ENCODE measurements at regions of chr5 and their contacts with region 1.

Region 1: DNA sequence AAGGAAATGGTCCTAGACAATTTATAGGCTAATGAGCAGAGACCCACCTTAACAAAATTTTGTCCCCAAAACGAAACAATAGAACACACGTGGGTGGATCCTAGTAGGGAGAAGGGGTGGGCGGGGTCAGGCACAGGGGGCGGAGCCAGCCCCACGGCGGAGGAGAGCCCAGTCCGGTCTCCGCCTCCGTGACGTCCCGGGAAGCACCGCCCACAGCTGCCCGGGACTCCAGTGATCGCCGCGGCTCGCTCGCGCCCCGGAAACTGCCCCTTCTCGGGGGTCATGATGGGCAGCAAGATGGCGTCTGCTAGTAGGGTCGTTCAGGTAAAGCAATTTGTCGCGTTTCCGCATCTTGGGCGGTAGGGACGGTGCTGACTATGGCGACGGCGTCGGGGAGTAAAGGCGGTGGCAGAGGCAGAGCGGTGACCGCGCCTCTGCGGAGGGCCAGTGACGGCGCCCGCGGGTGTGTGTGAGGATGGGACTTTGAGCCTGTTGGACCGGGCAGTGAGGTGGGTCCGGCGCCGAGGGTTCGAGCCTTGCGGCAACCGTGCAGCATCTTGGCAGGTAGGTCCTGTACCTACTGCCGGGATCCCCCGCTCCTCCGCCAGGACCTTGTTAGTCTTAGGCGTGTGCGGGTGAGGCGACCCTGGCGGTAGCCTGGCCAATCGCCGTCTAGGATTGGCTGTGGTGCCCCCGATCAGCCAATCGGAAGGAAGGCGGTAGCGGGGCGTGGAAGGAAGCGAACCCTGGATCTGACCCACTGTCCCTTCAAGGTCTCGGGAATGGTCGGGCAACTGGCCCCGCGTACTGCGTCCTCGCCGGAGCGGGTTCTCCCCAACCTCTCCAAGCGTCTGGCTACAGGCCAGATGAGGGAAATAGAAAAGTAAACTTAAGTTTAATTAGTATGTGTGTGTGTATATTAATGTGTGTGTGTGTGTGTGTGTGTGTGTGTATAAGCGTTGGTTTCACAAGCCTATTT is 16.8 kb upstream of the CDK7 start:
- DNase-seq: peak; percentile 93
- H3K4me3 Mint-ChIP-seq: peak overlapping the region; percentile 99
- H3K27ac Mint-ChIP-seq: peak overlapping the region; percentile 93
- H3K4me1 Mint-ChIP-seq: peaks cover 14% of the 10 kb centered on the region
- H3K27me3 Mint-ChIP-seq: no peaks in the 10 kb centered on the region

Region 2: DNA sequence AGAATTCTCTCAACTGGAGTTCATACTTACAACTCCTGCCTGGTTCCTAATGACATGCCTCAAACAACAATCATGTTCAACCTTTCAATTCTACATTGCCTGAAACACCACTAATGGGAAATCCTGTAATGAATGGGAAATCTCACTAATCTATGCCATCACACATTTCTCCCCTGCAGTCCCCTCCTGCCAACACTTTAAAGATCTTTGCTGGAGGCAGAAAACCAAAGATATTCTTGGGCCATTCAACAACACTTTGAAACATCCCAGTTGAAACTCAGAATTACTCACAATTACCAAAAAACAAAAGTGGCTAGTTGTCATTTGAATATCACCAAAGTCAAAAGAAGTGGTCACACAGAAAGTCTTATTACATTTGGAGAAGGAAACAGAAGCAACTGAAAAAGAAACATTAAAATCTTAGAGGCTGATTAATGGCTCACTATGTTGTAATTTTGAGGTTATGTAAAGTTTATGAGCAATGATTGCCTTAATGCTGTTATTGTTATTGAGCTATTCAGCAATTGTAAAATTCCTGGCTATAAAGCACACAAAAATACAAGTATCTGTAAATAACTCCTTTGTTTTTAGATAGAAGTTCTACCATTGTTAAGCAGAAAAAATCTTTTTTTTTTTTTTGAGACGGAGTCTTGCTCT is 437.4 kb before region 1 on chr5:
- CTCF ChIA-PET with region 1: no interaction called
- intact Hi-C with region 1: no loop called
- DNase-seq: no peak
- H3K4me3 Mint-ChIP-seq: no peak overlapping the region
- H3K27ac Mint-ChIP-seq: no peak overlapping the region
- H3K4me1 Mint-ChIP-seq: peaks cover 4% of the 10 kb centered on the region
- H3K27me3 Mint-ChIP-seq: no peaks in the 10 kb centered on the region

Region 3: DNA sequence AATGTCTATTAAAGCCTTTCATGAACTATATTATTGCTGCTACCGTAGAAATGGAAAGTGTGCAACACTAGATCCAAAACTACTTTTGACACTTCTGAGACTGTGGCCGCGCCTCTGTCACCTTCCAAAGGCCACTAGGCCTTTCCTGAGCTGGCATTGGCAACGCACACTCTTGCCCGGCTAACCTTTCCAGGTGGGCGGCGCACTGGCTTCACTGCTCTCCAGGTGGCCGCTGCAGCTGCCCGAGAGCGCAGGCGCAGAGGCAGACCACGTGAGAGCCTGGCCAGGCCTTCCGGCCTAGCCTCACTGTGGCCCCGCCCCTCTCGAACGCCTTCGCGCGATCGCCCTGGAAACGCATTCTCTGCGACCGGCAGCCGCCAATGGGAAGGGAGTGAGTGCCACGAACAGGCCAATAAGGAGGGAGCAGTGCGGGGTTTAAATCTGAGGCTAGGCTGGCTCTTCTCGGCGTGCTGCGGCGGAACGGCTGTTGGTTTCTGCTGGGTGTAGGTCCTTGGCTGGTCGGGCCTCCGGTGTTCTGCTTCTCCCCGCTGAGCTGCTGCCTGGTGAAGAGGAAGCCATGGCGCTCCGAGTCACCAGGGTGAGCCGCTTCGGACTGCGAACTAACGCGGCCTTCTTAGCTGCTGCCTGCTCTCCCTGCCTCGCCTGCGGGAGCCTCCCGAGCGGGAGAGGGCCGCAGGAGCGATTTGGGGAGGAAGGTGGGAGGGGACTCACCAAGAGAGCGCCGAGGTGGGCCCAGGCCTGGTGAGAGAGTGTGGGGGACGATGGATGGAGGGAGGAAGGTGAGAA is 50.9 kb before region 1 on chr5 and contains the start of gene CCNB1:
- CTCF ChIA-PET with region 1: no interaction called
- intact Hi-C with region 1: loop called (anchors 1 kb)
- DNase-seq: peak; percentile 99
- H3K4me3 Mint-ChIP-seq: peak within 1 kb of the TSS; percentile 95
- H3K27ac Mint-ChIP-seq: peak within 1 kb of the TSS; percentile 87
- H3K4me1 Mint-ChIP-seq: peaks cover 20% of the 10 kb centered on the region
- H3K27me3 Mint-ChIP-seq: no peaks in the 10 kb centered on the region
- total RNA-seq, gene CCNB1: 209 to 211 TPM

Region 4: DNA sequence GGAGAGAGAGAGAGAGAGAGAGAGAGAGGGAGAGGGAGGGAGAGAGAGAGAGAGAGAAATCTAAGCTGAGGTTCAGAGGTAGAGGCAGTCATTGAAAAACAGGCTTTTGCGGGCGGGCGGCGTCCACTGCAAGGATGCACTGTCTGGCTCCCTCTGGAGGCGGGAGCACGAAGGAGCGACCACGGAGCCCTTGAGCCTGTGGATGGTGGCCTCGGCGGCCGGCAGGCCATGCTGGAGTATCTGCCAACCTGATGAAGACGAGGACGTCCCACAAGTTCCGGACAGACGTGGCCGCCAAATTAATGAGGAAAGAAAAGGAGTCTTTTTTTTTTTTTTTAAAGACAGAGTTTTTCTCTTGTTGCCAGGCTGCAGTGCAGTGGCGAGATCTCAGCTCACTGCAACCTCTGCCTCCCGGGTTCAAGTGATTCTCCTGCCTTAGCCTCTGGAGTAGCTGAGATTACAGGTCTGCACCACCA is 117.0 kb after region 1 on chr5:
- CTCF ChIA-PET with region 1: no interaction called
- intact Hi-C with region 1: loop called (anchors 2 kb)
- DNase-seq: peak; percentile 88
- H3K4me3 Mint-ChIP-seq: peak overlapping the region; percentile 24
- H3K27ac Mint-ChIP-seq: no peak overlapping the region
- H3K4me1 Mint-ChIP-seq: peaks cover 13% of the 10 kb centered on the region
- H3K27me3 Mint-ChIP-seq: no peaks in the 10 kb centered on the region

Measured in activated naive CD4-positive, alpha-beta T cell treated with anti-CD3 and anti-CD28 coated beads for 36 hours (primary cell).